Mucosa of descending colon (tissue), 3 donors: ENCODE measurements at regions of chr21 and their contacts with region 1.

Region 1: DNA sequence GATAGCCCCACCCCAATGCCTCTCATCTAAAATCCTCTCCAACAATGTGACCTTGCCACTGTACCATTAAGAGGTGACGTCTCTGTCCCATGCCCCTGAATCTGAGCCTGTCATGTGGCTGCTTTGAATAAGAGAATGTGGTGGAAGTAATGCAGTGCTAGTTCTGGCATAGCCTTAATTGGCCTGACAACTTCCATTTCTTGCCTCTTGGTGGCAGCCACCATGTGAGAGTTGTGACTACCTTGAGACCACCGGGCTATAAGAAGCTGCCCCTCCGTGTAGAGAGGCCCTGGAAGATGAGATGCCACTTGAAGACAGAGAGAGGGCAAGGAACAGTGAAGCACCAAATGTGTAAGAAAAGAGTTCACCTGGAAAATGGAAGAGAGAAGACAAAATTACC is 95.4 kb downstream of the POFUT2 start:
- DNase-seq: no peak
- ATAC-seq: no peak
- H3K4me3 ChIP-seq: no peak overlapping the region
- H3K4me1 ChIP-seq: no peaks in the 10 kb centered on the region
- CTCF ChIP-seq: no peak

Region 2: GRCh38 chr21:45064618-45065399 is 127.5 kb before region 1 on chr21:
- intact Hi-C with region 1: no loop called
- DNase-seq: no peak
- ATAC-seq: no peak
- H3K4me3 ChIP-seq: no peak overlapping the region
- H3K4me1 ChIP-seq: no peaks in the 10 kb centered on the region
- CTCF ChIP-seq: no peak

Region 3: GRCh38 chr21:45248893-45249381 is 56.6 kb after region 1 on chr21:
- intact Hi-C with region 1: loop called in 1 of 2 experiments (anchors 10 kb)
- DNase-seq: no peak
- ATAC-seq: no peak
- H3K4me3 ChIP-seq: no peak overlapping the region
- H3K4me1 ChIP-seq: no peaks in the 10 kb centered on the region
- CTCF ChIP-seq: no peak